Left colon (tissue), 2 donors: ENCODE measurements at regions of chr2 and their contacts with region 1.

Region 1: DNA sequence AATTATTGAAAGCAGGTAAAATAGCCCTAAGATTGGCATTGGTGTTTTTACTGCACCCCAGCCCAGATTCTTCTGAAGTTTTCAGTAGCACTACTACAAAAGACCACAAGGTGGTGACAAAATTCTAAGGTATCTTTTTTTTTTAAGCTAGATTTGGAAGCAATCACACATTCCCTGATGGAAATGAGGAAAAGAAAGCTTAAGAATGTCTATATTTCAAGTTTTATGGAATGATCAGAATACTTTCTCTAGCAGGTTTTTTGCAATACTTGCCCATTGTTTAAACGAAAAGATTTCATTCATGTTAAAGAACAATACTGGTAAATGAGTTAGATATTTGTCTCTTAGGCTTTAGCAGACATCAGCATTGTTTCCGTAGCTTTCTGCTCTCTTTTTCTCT is 32.1 kb upstream of the ZNF638 start:
- DNase-seq: no peak
- ATAC-seq: no peak

Region 2: GRCh38 chr2:71510196-71510807 is 210.8 kb after region 1 on chr2:
- intact Hi-C with region 1: loop called in 1 of 2 experiments (anchors 2 kb)
- DNase-seq: peak; percentile 40 to 79
- ATAC-seq: peak; percentile 77